ENCODE measurements at regions of chr16 and their contacts with region 1.

Region 1: DNA sequence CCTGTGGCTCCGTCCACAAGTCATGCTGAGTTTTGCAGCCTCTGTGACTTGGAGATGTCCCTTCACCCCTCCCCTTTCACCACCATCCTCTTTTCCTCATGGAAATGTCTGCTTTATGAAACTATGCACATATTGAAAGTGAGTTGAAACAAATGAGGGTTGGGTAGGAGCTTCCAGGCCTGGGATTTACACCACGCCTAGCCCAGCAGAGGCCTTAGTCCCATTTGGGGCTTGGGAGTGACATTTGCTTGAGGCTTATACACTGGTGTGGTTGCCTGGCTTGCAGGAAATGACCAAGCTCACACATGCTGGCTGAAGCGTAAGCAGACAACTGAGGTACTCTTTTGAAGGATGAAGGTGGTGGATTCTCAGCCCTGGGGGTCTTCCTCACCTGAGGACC is 10.5 kb upstream of the SPNS1 start:
- DNase-seq: no peak
- H3K4me3 ChIP-seq: no peak overlapping the region
- H3K27ac ChIP-seq: no peak overlapping the region
- H3K4me1 ChIP-seq: no peaks in the 10 kb centered on the region
- H3K27me3 ChIP-seq: no peaks in the 10 kb centered on the region
- CTCF ChIP-seq: no peak

Region 2: DNA sequence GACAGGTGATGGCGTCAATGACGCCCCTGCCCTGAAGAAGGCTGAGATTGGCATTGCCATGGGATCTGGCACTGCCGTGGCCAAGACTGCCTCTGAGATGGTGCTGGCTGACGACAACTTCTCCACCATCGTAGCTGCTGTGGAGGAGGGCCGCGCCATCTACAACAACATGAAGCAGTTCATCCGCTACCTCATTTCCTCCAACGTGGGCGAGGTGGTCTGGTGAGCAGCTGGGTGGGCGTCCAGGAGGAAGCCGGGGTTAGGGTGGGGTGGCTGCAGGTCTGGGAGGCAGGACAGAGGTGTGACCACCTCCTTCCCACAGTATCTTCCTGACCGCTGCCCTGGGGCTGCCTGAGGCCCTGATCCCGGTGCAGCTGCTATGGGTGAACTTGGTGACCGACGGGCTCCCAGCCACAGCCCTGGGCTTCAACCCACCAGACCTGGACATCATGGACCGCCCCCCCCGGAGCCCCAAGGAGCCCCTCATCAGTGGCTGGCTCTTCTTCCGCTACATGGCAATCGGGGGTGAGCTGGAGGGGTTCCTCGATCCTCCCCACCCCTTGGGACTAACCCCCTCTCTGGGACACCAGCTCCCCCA is 62.1 kb before region 1 on chr16:
- CTCF ChIA-PET with region 1: no interaction called
- POLR2A ChIA-PET with region 1: interaction called, 14 read pairs
- intact Hi-C with region 1: no loop called
- DNase-seq: no peak
- H3K4me3 ChIP-seq: no peak overlapping the region
- H3K27ac ChIP-seq: no peak overlapping the region
- H3K4me1 ChIP-seq: no peaks in the 10 kb centered on the region
- H3K27me3 ChIP-seq: no peaks in the 10 kb centered on the region
- CTCF ChIP-seq: no peak